AG04450 (cell line): ENCODE measurements at regions of chr6 and their contacts with region 1.

Region 1: GRCh38 chr6:111483736-111484632 is 966 bp upstream of the REV3L start:
- DNase-seq: peak; percentile 95
- H3K4me3 ChIP-seq: peak overlapping the region; percentile 60
- H3K27ac ChIP-seq: peak overlapping the region; percentile 95
- H3K27me3 ChIP-seq: no peaks in the 10 kb centered on the region
- CTCF ChIP-seq: no peak

Region 2: DNA sequence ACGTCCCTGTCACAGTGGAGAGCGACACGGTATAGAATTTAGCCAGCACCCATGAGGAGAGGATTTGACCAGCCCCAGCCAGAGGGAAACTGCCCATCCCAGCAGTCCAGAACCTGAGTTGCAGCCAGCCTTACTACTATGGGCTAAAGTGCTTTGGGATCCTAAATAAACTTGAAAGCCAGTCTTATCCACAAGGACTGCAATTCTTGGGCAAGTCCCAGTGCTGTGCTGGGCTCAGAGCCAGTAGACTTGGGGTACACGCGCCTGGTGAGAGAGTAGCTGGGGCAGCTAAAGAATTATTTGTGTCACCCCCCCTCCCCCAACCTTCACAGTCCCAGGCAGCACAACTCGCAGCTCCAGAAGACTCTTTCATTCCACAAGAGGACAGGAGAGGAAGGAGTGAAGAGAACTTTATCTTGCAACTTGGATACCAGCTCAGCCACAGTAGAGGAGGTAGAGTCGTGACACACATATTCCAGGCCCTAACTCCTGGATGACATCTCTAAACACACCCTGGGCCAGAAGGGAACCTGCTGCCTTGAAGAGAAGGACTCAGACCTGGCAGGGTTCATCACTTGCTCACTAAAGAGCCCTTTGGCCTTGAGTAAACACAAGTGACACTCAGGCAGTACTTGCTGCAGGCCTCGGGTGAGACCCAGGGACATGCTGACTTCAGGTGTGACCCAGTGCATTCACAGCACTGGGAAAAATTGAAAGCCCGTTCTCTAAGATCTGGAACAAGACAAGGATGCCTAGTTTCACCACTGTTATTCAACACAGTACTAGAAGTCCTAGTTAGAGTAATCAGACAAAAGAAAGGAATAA is 101.3 kb before region 1 on chr6:
- CTCF ChIA-PET with region 1: no interaction called
- POLR2A ChIA-PET with region 1: no interaction called
- DNase-seq: no peak
- H3K4me3 ChIP-seq: no peak overlapping the region
- H3K27ac ChIP-seq: no peak overlapping the region
- H3K27me3 ChIP-seq: no peaks in the 10 kb centered on the region
- CTCF ChIP-seq: no peak

Region 3: DNA sequence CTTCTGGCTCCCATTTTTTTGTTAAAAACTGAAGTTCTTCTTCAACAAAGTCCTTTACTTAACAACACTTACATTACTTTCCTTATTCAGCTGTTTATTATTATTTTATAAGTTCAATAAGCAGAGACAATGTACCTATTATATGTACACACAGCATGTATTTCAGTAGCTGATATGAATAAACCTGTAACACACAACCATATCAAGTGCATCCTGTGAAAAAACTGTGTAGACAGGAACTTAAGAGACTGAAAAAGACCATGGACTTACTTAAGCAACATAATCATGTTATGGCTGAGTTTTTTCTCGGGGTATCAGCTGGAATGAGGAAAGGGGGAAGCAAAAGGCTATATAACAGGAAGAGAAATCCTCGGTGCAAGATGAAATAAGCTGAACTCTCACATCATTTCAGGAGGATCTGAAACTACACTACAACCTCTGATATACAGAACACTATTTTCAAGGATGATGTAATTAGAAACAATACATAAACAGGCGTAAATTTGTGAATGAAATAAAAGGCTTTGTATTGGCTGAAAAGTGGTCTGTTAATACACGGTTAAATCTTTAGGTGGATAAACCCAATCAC is 71.9 kb before region 1 on chr6:
- CTCF ChIA-PET with region 1: no interaction called
- POLR2A ChIA-PET with region 1: no interaction called
- DNase-seq: no peak
- H3K4me3 ChIP-seq: no peak overlapping the region
- H3K27ac ChIP-seq: no peak overlapping the region
- H3K27me3 ChIP-seq: no peaks in the 10 kb centered on the region
- CTCF ChIP-seq: no peak

Region 4: DNA sequence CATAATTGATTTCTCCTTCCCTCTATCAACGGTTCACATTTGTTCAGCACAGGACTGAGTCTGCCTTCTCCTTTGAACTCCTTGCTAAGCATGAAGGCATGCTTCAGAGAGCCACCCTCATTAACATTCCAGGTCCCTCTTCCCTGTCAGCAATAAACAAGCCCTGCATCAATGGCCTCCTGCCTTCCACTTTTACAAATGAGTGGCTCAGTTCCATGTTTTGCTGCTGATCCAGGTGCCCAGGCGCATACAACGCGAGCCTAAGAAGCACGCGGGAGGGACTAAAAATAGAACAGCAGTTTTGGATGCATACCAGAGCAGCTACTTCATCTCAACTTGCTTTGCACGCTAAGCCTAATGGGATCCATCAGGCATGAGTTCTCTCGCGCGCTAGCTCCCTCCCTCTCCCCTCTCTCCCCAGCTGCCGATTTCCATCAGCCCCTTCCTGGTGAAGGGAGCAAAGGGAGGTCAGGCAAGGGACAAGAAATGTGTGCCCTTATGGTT is 68.3 kb after region 1 on chr6:
- CTCF ChIA-PET with region 1: no interaction called
- POLR2A ChIA-PET with region 1: interaction called, 10 read pairs
- DNase-seq: peak; percentile 95
- H3K4me3 ChIP-seq: peak overlapping the region; percentile 18; the same call in 1 of the 2 replicates
- H3K27ac ChIP-seq: peak overlapping the region; percentile 94
- H3K27me3 ChIP-seq: no peaks in the 10 kb centered on the region
- CTCF ChIP-seq: no peak

Region 5: DNA sequence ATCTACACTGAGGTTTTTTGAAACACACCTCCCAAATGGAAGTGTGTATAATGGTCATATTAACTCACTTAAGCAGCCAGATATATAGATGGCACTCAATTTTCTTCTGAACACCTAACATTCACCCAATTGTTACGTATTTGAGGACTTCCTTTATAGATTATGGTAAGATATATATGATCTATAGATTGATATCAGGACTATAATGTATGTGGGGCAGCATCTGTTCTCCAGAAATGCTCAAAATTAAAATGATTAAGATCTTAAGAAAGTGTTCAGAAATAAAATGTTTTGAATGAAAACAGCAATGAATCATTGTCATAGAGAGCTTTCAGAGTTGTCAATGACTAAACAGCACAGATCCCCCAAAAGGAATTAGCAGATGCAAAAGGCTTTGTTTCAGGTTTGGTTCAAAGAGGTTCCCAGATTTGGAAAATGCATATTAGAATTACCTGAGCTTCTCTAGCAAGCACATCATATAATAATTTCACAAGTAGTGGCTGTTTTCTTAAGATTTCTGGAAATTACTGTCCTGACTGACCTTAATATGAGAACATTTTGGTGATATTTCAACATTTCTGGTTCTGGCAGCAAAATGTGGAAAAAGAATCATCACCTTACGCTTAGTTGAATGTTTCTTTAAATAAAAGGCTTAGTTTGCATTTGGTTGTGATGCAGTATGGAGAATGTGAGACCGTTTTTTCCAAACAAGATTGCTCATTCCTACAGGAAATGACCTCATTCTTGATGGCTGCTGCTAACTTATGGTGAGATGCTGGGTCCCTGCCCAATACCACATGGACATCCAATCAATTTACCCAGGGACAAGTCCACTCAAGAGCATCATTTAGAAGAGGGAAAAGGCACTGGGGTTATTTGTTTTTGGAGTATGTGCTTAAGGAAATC is 90.2 kb after region 1 on chr6:
- CTCF ChIA-PET with region 1: no interaction called
- POLR2A ChIA-PET with region 1: interaction called, 15 read pairs
- DNase-seq: peak; percentile 82
- H3K4me3 ChIP-seq: no peak overlapping the region
- H3K27ac ChIP-seq: peak overlapping the region; percentile 71
- H3K27me3 ChIP-seq: no peaks in the 10 kb centered on the region
- CTCF ChIP-seq: no peak

Region 6: GRCh38 chr6:111605100-111605751 is 121.2 kb after region 1 on chr6:
- CTCF ChIA-PET with region 1: no interaction called
- POLR2A ChIA-PET with region 1: interaction called, 18 read pairs
- DNase-seq: no peak
- H3K4me3 ChIP-seq: peak overlapping the region; percentile 67
- H3K27ac ChIP-seq: peak overlapping the region; percentile 98
- H3K27me3 ChIP-seq: no peaks in the 10 kb centered on the region
- CTCF ChIP-seq: no peak